Activated B cell treated with CpG ODN at 0.5 μM for 24 hours (primary cell): ENCODE measurements at regions of chr3 and their contacts with region 1.

Region 1: GRCh38 chr3:57555738-57556458 is at the start of gene PDE12:
- DNase-seq: peak; percentile 77
- ATAC-seq: peak; percentile 79
- H3K4me3 Mint-ChIP-seq: peak within 1 kb of the TSS; percentile 87
- H3K27ac Mint-ChIP-seq: peak within 1 kb of the TSS; percentile 99
- H3K4me1 Mint-ChIP-seq: peaks cover 41% of the 10 kb centered on the region
- H3K27me3 Mint-ChIP-seq: no peaks in the 10 kb centered on the region
- CTCF ChIP-seq: no peak
- total RNA-seq, gene PDE12: 23.7 and 24.8 TPM in 2 replicates

Region 2: GRCh38 chr3:57100046-57100695 is 455.7 kb before region 1 on chr3:
- CTCF ChIA-PET with region 1: no interaction called
- POLR2A ChIA-PET with region 1: no interaction called
- intact Hi-C with region 1: loop called (anchors 5 kb)
- DNase-seq: no peak
- ATAC-seq: peak; percentile 88
- H3K4me3 Mint-ChIP-seq: no peak overlapping the region
- H3K27ac Mint-ChIP-seq: no peak overlapping the region
- H3K4me1 Mint-ChIP-seq: no peaks in the 10 kb centered on the region
- H3K27me3 Mint-ChIP-seq: peaks cover 2% of the 10 kb centered on the region
- CTCF ChIP-seq: peak; percentile 84

Region 3: GRCh38 chr3:57675530-57675929 is 119.6 kb after region 1 on chr3:
- CTCF ChIA-PET with region 1: no interaction called
- POLR2A ChIA-PET with region 1: interaction called, 6 read pairs
- intact Hi-C with region 1: loop called (anchors 2 kb)
- DNase-seq: no peak
- ATAC-seq: peak; percentile 25
- H3K4me3 Mint-ChIP-seq: no peak overlapping the region
- H3K27ac Mint-ChIP-seq: peak overlapping the region; percentile 82
- H3K4me1 Mint-ChIP-seq: peaks cover 49% of the 10 kb centered on the region
- H3K27me3 Mint-ChIP-seq: no peaks in the 10 kb centered on the region
- CTCF ChIP-seq: no peak

Region 4: DNA sequence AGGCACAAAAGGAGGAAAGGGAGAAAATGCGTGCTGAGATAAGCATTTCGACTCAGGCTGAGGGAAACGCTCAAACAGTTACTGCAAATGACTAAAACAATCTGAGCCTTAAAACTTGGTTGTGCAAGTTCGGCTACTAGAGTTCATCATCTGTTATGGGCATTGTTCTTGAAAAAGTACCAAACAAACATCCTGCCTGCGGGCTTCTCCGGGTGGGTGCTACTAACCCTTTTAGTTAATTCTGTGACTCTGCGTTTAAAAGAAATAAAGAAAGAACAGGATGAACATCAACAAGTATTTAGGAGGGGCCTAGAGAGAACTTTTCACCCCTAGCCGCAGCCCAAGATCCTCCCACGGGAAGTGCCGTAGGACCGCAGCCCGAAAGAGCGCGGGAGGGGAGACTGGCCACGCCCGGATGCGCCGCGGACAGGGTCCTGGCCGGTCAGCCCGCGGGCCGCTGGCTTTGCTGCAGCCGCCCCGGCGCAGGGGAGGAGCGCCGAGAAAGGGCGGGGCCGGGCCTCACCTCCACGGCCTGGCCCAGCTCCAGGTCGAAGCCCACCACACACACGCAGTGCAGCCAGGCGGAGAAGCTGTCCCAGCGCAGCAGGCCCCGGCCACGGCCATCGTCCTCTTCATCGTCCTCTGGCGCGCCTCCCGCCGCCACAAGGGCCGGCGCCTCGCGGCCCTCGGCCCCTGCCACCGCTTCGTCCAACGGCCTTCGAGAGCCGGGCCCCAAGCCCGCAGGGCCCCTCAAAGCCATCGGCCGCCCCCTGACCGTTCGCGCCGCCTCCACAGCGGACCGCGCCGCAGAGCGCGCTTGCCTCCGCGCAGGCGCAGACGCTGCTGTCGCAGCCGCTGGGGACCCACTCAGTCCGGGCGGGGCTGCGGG is 136.6 kb after region 1 on chr3 and contains the start of gene DENND6A:
- CTCF ChIA-PET with region 1: no interaction called
- POLR2A ChIA-PET with region 1: interaction called, 7 read pairs
- intact Hi-C with region 1: loop called (anchors 1 kb)
- DNase-seq: peak; percentile 95
- ATAC-seq: peak; percentile 86
- H3K4me3 Mint-ChIP-seq: peak within 1 kb of the TSS; percentile 89
- H3K27ac Mint-ChIP-seq: peak within 1 kb of the TSS; percentile 85
- H3K4me1 Mint-ChIP-seq: peaks cover 35% of the 10 kb centered on the region
- H3K27me3 Mint-ChIP-seq: no peaks in the 10 kb centered on the region
- CTCF ChIP-seq: no peak
- total RNA-seq, gene DENND6A: 21.5 and 25.7 TPM in 2 replicates

Region 5: GRCh38 chr3:57755668-57756527 is 200.0 kb after region 1 on chr3 and contains the start of gene SLMAP:
- CTCF ChIA-PET with region 1: no interaction called
- POLR2A ChIA-PET with region 1: interaction called, 16 read pairs
- intact Hi-C with region 1: loop called (anchors 1 kb)
- DNase-seq: peak; percentile 87
- ATAC-seq: peak; percentile 94
- H3K4me3 Mint-ChIP-seq: peak within 1 kb of the TSS; percentile 95
- H3K27ac Mint-ChIP-seq: peak within 1 kb of the TSS; percentile 94
- H3K4me1 Mint-ChIP-seq: peaks cover 39% of the 10 kb centered on the region
- H3K27me3 Mint-ChIP-seq: no peaks in the 10 kb centered on the region
- CTCF ChIP-seq: no peak
- total RNA-seq, gene SLMAP: 45.4 and 57.1 TPM in 2 replicates

Region 6: GRCh38 chr3:58116161-58116955 is 560.5 kb after region 1 on chr3:
- CTCF ChIA-PET with region 1: no interaction called
- POLR2A ChIA-PET with region 1: no interaction called
- intact Hi-C with region 1: loop called (anchors 10 kb)
- DNase-seq: peak; percentile 57
- ATAC-seq: peak; percentile 90
- H3K4me3 Mint-ChIP-seq: peak overlapping the region; percentile 60
- H3K27ac Mint-ChIP-seq: peak overlapping the region; percentile 92
- H3K4me1 Mint-ChIP-seq: peaks cover 74% of the 10 kb centered on the region
- H3K27me3 Mint-ChIP-seq: no peaks in the 10 kb centered on the region
- CTCF ChIP-seq: no peak